ENCODE measurements at regions of chr11 and their contacts with region 1.

Region 1: DNA sequence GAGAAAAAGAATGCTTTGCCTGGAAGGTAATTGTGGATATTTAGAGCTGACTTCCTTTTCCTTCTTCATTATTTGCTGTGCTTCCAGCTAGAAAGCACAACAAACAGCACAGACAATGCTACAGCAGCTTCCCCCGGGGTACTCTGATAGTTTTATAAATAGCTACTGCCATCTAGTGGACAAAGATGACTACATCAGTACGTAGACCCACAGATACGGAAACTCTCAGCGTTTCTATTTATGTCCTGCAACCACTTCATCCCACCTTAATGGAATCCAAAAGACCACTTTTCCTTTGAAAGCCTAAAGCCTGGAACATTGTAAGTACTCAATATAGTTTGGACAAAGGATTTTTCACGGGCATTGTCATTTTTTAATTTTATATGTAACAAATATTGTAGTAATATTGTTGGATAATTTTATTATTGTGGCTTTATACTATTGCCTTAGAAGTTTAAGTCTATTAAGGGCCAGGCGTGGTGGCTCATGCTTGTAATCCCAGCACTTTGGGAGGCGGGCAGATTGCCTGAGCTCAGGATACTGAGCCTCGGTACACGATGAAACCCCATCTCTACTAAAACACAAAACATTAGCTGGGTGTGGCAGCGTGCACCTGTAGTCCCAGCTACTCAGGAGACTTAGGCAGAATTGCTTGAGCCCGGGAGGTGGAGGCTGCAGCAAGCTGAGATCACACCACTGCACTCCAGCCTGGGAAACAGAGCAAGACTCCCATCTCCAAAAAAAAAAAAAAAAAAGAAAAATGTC is 7.5 kb downstream of the HSPA8 start:
- DNase-seq: peak in 1 of 2 experiments; percentile 74
- H3K4me3 ChIP-seq: no peak overlapping the region
- H3K27ac ChIP-seq: peak overlapping the region; percentile 36
- H3K4me1 ChIP-seq: peaks cover 21% of the 10 kb centered on the region
- H3K27me3 ChIP-seq: no peaks in the 10 kb centered on the region
- CTCF ChIP-seq: peak; percentile 87

Region 2: GRCh38 chr11:122556605-122557004 is 497.9 kb before region 1 on chr11:
- CTCF ChIA-PET with region 1: no interaction called
- POLR2A ChIA-PET with region 1: interaction called, 10 read pairs
- intact Hi-C with region 1: no loop called
- DNase-seq: peak in 1 of 2 experiments; percentile 34
- H3K4me3 ChIP-seq: peak overlapping the region; percentile 47
- H3K27ac ChIP-seq: no peak overlapping the region
- H3K4me1 ChIP-seq: no peaks in the 10 kb centered on the region
- H3K27me3 ChIP-seq: no peaks in the 10 kb centered on the region
- CTCF ChIP-seq: no peak; the same call in 1 of the 2 replicates

Region 3: GRCh38 chr11:122655527-122656072 is 398.9 kb before region 1 on chr11 and contains the start of gene UBASH3B:
- CTCF ChIA-PET with region 1: interaction called, 15 read pairs
- POLR2A ChIA-PET with region 1: no interaction called
- intact Hi-C with region 1: no loop called
- DNase-seq: peak; percentile 81 to 85
- H3K4me3 ChIP-seq: peak within 1 kb of the TSS; percentile 81
- H3K27ac ChIP-seq: peak within 1 kb of the TSS; percentile 91
- H3K4me1 ChIP-seq: peaks cover 42% of the 10 kb centered on the region
- H3K27me3 ChIP-seq: no peaks in the 10 kb centered on the region
- CTCF ChIP-seq: peak; percentile 19; the same call in 1 of the 2 replicates
- total RNA-seq, gene UBASH3B: 80.3 and 81.9 TPM in 2 replicates

Region 4: DNA sequence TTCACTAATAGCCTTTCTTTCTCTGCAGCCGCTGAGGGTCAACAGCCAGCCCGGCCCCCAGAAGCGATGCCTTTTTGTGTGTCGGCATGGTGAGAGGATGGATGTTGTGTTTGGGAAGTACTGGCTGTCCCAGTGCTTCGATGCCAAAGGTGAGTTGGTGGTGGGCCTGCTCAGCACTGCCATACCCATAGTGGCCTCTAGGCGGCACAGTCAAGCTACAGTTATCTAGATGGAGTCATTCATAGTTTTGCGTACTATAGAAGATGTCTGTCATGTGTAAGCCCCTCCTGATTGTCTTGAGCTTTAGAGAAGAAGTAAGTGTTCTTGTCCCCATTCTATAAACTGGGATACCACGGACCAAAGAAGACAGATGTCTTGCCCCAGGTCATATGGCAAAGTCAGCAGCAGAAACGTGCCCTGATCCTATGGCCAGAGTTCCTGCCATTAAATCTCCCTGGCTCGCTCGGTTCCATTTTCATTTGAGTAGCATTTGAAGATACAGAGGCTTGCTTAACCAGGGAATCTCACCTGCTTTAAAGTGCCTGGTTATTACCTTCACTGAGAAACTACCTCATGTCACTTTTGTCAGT is 258.3 kb before region 1 on chr11:
- CTCF ChIA-PET with region 1: interaction called, 4 read pairs
- POLR2A ChIA-PET with region 1: no interaction called
- intact Hi-C with region 1: loop called (anchors 10 kb)
- DNase-seq: peak in 1 of 2 experiments; percentile 46
- H3K4me3 ChIP-seq: no peak overlapping the region
- H3K27ac ChIP-seq: no peak overlapping the region
- H3K4me1 ChIP-seq: peaks cover 13% of the 10 kb centered on the region
- H3K27me3 ChIP-seq: no peaks in the 10 kb centered on the region
- CTCF ChIP-seq: peak; percentile 96

Region 5: GRCh38 chr11:123000721-123001120 is 53.8 kb before region 1 on chr11:
- CTCF ChIA-PET with region 1: no interaction called
- POLR2A ChIA-PET with region 1: interaction called, 12 read pairs
- intact Hi-C with region 1: no loop called
- DNase-seq: no peak
- H3K4me3 ChIP-seq: no peak overlapping the region
- H3K27ac ChIP-seq: no peak overlapping the region
- H3K4me1 ChIP-seq: no peaks in the 10 kb centered on the region
- H3K27me3 ChIP-seq: peaks cover 23% of the 10 kb centered on the region
- CTCF ChIP-seq: no peak

Region 6: GRCh38 chr11:123011510-123011909 is 43.0 kb before region 1 on chr11:
- CTCF ChIA-PET with region 1: no interaction called
- POLR2A ChIA-PET with region 1: no interaction called
- intact Hi-C with region 1: no loop called
- DNase-seq: no peak
- H3K4me3 ChIP-seq: no peak overlapping the region
- H3K27ac ChIP-seq: no peak overlapping the region
- H3K4me1 ChIP-seq: no peaks in the 10 kb centered on the region
- H3K27me3 ChIP-seq: peaks cover 10% of the 10 kb centered on the region; the same call in 1 of the 2 replicates
- CTCF ChIP-seq: no peak

Region 7: DNA sequence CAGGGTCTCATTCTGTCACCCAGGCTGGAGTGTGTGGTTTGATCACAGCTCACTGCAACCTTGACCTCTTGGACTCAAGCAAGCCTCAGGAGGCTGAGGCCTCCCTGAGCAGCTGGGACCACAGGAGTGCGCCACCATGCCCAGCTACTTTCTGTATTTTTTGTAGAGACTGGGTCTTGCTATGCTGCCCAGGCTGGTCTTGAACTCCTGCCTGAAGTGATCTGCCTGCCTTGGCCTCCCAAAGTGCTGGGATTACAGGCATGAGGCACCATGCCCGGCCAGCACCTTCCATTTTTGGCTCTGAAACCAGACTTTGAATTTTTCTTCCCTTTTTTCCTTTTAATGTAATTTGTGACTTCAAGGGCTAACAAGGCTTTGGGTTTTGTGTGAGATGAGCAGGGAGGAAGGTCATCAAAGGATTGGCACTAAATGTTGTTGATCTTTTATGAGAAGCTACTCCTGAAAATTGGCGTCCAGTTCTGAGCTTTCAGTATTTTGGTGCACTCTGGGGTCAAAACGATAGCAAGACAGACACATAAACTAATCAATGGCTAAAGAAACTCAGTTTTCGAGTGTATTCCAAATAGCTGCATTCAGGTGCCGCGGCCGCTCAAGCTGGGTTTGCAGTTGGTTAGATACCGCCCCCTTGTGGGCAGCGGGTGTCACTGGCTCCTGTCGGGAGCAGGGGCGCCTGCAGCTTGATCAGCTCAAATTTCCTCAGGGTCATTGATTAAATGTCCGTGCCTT is 192.4 kb after region 1 on chr11:
- CTCF ChIA-PET with region 1: interaction called, 12 read pairs
- POLR2A ChIA-PET with region 1: no interaction called
- intact Hi-C with region 1: no loop called
- DNase-seq: peak; percentile 54 to 80
- H3K4me3 ChIP-seq: no peak overlapping the region
- H3K27ac ChIP-seq: no peak overlapping the region
- H3K4me1 ChIP-seq: peaks cover 16% of the 10 kb centered on the region
- H3K27me3 ChIP-seq: no peaks in the 10 kb centered on the region
- CTCF ChIP-seq: peak; percentile 94